Activated CD4-positive, alpha-beta T cell treated with anti-CD3 and anti-CD28 coated beads for 36 hours (primary cell): ENCODE measurements at regions of chr12 and their contacts with region 1.

Region 1: GRCh38 chr12:104201238-104202001 is 14.2 kb upstream of the TXNRD1 start:
- DNase-seq: peak; percentile 53
- ATAC-seq: peak; percentile 77
- H3K4me3 Mint-ChIP-seq: no peak overlapping the region
- H3K27ac Mint-ChIP-seq: no peak overlapping the region
- H3K4me1 Mint-ChIP-seq: peaks cover 2% of the 10 kb centered on the region
- H3K27me3 Mint-ChIP-seq: peaks cover 8% of the 10 kb centered on the region

Region 2: DNA sequence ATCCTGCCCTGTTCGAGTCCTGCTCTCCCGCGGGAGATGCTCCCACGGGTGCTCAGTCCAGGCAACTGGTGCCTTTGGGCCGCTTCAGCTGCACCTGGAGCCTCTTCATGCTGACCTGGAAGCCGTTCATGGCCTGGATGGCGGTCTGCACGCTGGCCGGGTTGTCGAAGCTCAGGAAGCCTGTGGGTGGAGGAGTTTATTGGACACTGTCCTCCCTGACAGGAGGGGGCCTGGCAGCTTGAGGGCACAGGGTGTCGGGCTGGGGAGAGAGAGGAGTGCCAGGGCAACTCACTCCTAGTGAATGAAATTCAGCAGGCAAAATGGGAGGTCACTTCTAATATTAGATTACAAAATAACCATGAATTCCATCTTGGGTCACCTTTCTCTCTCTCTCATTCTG is 54.1 kb before region 1 on chr12:
- CTCF ChIA-PET with region 1: interaction called, 3 read pairs
- POLR2A ChIA-PET with region 1: no interaction called
- intact Hi-C with region 1: loop called in 1 of 2 experiments (anchors 5 kb)
- DNase-seq: no peak
- ATAC-seq: no peak
- H3K4me3 Mint-ChIP-seq: no peak overlapping the region
- H3K27ac Mint-ChIP-seq: no peak overlapping the region
- H3K4me1 Mint-ChIP-seq: no peaks in the 10 kb centered on the region
- H3K27me3 Mint-ChIP-seq: peaks cover 5% of the 10 kb centered on the region

Region 3: DNA sequence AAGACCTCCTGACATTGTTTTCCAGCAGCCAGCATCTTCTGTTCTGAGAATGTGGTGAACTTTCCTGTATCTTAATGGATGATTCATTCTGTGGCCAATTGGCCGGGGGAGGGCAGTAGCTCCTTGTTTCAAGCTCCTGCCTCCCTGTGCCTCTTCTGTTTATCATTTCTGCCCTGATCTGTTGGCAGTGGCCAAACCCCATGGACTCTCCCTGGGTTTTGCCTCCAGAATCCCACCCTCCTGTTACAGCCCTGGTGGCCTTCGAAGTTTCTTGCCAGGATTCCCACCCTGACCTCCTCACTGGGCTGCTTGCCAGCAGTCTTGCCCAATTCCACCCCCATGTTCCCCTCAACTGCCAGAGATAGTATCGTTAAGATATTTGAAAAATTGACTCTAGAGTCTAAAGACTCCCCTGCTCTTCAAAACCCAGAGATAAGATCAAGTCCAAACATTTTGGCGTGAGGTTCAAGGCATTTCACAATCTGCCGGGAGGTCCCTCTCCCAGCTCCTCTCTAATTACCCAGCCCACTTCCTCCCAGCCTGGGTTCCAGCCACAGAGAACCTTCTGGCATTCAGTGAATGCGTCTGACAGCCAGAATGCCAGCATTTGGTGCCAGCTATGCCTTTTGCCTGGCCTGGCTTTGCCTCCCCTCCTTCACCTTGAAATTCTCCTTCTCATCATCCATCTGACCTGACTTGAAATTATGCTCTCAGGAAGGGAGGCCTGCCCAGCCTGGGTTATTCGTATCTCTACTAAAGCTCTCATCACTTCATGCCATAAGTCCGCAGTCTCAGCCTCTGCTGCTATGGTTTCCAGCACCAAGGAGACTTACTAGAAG is 23.5 kb before region 1 on chr12:
- CTCF ChIA-PET with region 1: no interaction called
- POLR2A ChIA-PET with region 1: no interaction called
- intact Hi-C with region 1: loop called in 1 of 2 experiments (anchors 2 kb)
- DNase-seq: peak; percentile 33
- ATAC-seq: peak; percentile 55
- H3K4me3 Mint-ChIP-seq: no peak overlapping the region
- H3K27ac Mint-ChIP-seq: no peak overlapping the region
- H3K4me1 Mint-ChIP-seq: peaks cover 5% of the 10 kb centered on the region
- H3K27me3 Mint-ChIP-seq: no peaks in the 10 kb centered on the region

Region 4: DNA sequence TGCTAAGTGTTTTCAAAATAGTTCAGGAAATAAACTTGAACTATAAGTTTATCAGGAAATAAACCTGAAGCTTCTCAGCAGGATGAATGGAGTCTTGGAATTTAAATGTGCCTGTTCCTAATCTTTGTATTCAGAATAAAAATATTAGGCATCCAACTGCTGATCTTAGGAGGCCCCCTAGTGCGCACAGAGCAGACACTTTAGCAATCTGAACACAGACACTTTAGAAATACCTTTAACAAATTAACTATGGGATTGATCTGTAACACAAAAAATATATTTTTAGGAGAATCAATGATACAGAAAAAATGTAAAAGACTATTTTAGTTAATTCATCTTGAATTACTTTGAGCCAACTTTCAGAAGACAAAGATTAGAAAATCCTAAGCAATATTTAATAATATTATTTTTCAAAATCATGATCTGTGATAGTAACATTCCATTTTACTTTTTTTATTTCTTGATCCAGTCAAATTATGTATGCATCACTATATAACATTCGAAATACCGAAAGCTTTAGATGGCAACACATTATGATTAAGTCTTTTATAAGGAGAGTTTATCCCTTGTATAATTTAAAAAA is 675.8 kb after region 1 on chr12:
- CTCF ChIA-PET with region 1: no interaction called
- POLR2A ChIA-PET with region 1: no interaction called
- intact Hi-C with region 1: loop called in 1 of 2 experiments (anchors 2 kb)
- DNase-seq: peak; percentile 46
- ATAC-seq: peak; percentile 66
- H3K4me3 Mint-ChIP-seq: no peak overlapping the region
- H3K27ac Mint-ChIP-seq: no peak overlapping the region
- H3K4me1 Mint-ChIP-seq: no peaks in the 10 kb centered on the region
- H3K27me3 Mint-ChIP-seq: no peaks in the 10 kb centered on the region

Region 5: GRCh38 chr12:105382771-105383622 is 1181.6 kb after region 1 on chr12:
- CTCF ChIA-PET with region 1: no interaction called
- POLR2A ChIA-PET with region 1: no interaction called
- intact Hi-C with region 1: loop called in 1 of 2 experiments (anchors 1 kb)
- DNase-seq: peak; percentile 12
- ATAC-seq: peak; percentile 51
- H3K4me3 Mint-ChIP-seq: no peak overlapping the region
- H3K27ac Mint-ChIP-seq: no peak overlapping the region
- H3K4me1 Mint-ChIP-seq: no peaks in the 10 kb centered on the region
- H3K27me3 Mint-ChIP-seq: no peaks in the 10 kb centered on the region